Activated B cell treated with CpG ODN at 0.5 μM for 24 hours (primary cell): ENCODE measurements at regions of chr20 and their contacts with region 1.

Region 1: DNA sequence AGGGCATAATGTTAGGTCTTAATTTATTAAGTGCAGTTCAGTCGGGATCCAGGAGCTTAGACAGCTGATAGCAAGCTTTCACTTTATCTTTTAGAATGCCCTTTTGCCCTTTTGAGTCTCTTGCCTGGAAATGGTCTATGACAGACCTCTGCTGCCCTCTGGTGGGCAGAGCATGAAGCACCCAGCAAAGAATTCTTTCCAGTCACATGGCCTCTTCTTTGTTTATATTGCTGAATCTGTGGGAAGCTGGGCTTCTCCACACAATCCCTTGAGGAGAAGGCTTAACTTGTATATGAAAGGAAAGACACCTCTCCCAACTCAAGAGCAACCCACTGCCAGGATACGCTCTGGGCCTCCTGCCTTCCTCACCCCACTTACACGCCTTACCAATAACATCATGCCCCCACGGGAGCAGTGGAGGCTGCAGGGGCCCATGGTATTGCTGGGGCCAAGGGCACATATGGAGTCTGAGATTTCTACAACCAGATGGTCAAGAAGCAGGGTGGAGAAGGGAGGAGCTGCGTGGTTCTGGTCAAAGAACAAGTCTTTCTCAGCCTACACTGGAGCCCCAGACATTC is 20.4 kb downstream of the WFDC3 start:
- DNase-seq: peak; percentile 65
- ATAC-seq: peak; percentile 71
- H3K4me3 Mint-ChIP-seq: no peak overlapping the region
- H3K27ac Mint-ChIP-seq: no peak overlapping the region
- H3K4me1 Mint-ChIP-seq: peaks cover 5% of the 10 kb centered on the region
- H3K27me3 Mint-ChIP-seq: peaks cover 16% of the 10 kb centered on the region
- CTCF ChIP-seq: peak; percentile 20

Region 2: GRCh38 chr20:45095753-45096371 is 675.4 kb before region 1 on chr20:
- CTCF ChIA-PET with region 1: interaction called, 17 read pairs
- POLR2A ChIA-PET with region 1: no interaction called
- intact Hi-C with region 1: loop called (anchors 1 kb)
- DNase-seq: no peak
- ATAC-seq: peak; percentile 65
- H3K4me3 Mint-ChIP-seq: no peak overlapping the region
- H3K27ac Mint-ChIP-seq: no peak overlapping the region
- H3K4me1 Mint-ChIP-seq: peaks cover 19% of the 10 kb centered on the region
- H3K27me3 Mint-ChIP-seq: peaks cover 29% of the 10 kb centered on the region
- CTCF ChIP-seq: peak; percentile 36

Region 3: DNA sequence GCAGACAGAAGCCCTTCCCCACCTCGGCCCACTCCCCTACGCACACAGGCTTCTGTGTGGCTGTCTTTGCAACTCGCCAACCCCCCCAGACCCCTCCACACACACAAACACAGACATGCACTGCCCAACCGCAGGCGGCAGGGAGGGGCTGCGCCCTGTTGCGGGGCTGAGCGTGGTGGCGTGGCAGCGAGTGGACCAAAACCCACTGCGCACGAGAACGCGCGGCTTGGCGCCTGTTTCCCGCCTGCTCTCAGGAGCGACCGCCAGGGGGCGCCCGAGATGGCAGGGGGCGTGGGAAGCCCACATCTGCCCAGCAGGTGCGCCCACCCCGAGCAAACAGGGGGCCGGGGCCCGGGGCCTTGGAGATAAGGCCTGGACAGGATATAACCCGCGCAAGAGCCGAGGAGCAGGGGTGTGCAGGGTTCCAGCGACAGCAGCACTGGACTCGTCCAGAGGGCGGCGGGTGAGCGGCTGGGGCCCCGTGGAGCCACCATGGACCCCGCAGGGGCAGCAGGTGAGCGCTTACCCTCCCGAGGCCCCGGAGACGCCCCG is 464.8 kb before region 1 on chr20 and contains the start of gene RBPJL:
- CTCF ChIA-PET with region 1: interaction called, 10 read pairs
- POLR2A ChIA-PET with region 1: no interaction called
- intact Hi-C with region 1: loop called (anchors 1 kb)
- DNase-seq: peak; percentile 44
- ATAC-seq: no peak
- H3K4me3 Mint-ChIP-seq: no peak within 1 kb of the TSS
- H3K27ac Mint-ChIP-seq: no peak within 1 kb of the TSS
- H3K4me1 Mint-ChIP-seq: peaks cover 8% of the 10 kb centered on the region
- H3K27me3 Mint-ChIP-seq: peaks cover 47% of the 10 kb centered on the region
- CTCF ChIP-seq: peak; percentile 32
- total RNA-seq, gene RBPJL: not detected in 2 replicates

Region 4: DNA sequence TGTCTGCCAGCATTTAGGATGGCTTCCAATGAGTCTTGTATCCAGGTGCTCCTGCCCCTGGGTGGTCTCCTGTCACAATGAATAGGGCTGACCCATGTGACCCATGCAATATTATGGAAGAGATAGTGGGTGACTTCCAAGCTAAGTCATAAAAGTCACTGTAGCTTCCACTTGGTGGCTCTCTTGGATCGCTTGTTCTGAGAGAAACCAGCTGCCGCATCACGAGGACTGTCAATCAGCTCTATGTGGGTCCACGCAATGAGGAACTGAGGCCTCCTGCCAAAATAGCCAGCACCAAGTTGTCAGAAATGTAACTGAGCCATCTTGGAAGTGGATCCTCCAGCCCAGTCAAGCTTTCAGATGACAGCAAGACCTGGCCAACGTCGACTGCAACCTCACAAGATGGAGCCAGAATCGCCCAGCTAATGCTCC is 448.3 kb before region 1 on chr20:
- CTCF ChIA-PET with region 1: interaction called, 49 read pairs
- POLR2A ChIA-PET with region 1: interaction called, 3 read pairs
- intact Hi-C with region 1: loop called (anchors 1 kb)
- DNase-seq: no peak
- ATAC-seq: peak; percentile 19
- H3K4me3 Mint-ChIP-seq: no peak overlapping the region
- H3K27ac Mint-ChIP-seq: no peak overlapping the region
- H3K4me1 Mint-ChIP-seq: peaks cover 37% of the 10 kb centered on the region
- H3K27me3 Mint-ChIP-seq: no peaks in the 10 kb centered on the region
- CTCF ChIP-seq: no peak

Region 5: GRCh38 chr20:45373353-45374100 is 397.7 kb before region 1 on chr20:
- CTCF ChIA-PET with region 1: interaction called, 15 read pairs
- POLR2A ChIA-PET with region 1: no interaction called
- intact Hi-C with region 1: no loop called
- DNase-seq: peak; percentile 76
- ATAC-seq: peak; percentile 94
- H3K4me3 Mint-ChIP-seq: peak overlapping the region; percentile 86
- H3K27ac Mint-ChIP-seq: peak overlapping the region; percentile 76
- H3K4me1 Mint-ChIP-seq: peaks cover 56% of the 10 kb centered on the region
- H3K27me3 Mint-ChIP-seq: no peaks in the 10 kb centered on the region
- CTCF ChIP-seq: no peak

Region 6: GRCh38 chr20:45545754-45546453 is 225.4 kb before region 1 on chr20:
- CTCF ChIA-PET with region 1: no interaction called
- POLR2A ChIA-PET with region 1: no interaction called
- intact Hi-C with region 1: loop called (anchors 2 kb)
- DNase-seq: no peak
- ATAC-seq: no peak
- H3K4me3 Mint-ChIP-seq: no peak overlapping the region
- H3K27ac Mint-ChIP-seq: no peak overlapping the region
- H3K4me1 Mint-ChIP-seq: no peaks in the 10 kb centered on the region
- H3K27me3 Mint-ChIP-seq: peaks cover 27% of the 10 kb centered on the region
- CTCF ChIP-seq: no peak

Region 7: GRCh38 chr20:45783656-45784294 is 12.5 kb after region 1 on chr20:
- CTCF ChIA-PET with region 1: interaction called, 10 read pairs
- POLR2A ChIA-PET with region 1: no interaction called
- intact Hi-C with region 1: no loop called
- DNase-seq: no peak
- ATAC-seq: no peak
- H3K4me3 Mint-ChIP-seq: no peak overlapping the region
- H3K27ac Mint-ChIP-seq: no peak overlapping the region
- H3K4me1 Mint-ChIP-seq: peaks cover 12% of the 10 kb centered on the region
- H3K27me3 Mint-ChIP-seq: peaks cover 7% of the 10 kb centered on the region
- CTCF ChIP-seq: no peak

Region 8: DNA sequence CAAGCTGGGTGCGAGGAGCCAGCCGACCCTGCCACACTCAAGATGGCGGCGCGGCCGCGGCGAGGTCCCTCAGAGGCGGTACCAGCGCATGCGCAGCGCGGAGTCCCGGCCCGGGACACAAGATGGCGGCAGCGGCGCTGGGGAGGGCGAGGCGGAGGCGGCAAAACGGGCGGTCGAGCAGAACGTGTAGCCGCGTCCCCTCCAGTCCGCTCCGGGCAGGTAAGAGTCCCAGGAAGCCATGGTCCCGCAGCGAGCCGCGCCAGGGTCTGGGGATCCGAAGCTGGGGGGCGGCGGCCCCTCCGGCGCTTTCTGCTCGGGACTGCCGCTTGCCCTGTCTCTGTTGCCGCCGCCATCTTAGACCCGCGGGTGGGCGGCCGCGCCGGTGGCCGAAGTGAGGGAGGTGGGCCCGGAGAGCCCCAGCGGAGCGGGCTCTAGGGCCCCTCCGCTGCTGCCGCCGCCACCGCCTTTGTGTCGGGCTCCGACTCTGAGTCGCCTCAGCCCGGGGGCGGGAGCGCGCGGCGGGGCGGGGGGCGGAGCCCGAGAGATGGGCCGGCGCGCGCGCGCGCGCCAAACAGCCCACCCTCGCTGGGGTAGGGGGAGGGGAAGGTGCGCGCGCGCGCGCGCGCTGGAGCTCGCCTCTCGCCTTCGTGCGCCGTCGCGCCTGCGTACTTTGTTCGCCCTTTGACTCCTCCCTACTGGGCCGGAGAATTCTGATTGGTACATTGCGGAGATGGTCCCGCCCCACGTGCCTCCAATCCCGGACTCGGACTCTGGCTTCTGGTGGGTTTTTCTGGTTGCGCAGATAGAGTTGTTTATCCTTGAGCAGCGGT is 163.5 kb after region 1 on chr20 and contains the start of gene PCIF1:
- CTCF ChIA-PET with region 1: no interaction called
- POLR2A ChIA-PET with region 1: no interaction called
- intact Hi-C with region 1: no loop called
- DNase-seq: peak; percentile 97
- ATAC-seq: peak; percentile 80
- H3K4me3 Mint-ChIP-seq: peak within 1 kb of the TSS; percentile 97
- H3K27ac Mint-ChIP-seq: peak within 1 kb of the TSS; percentile 98
- H3K4me1 Mint-ChIP-seq: peaks cover 29% of the 10 kb centered on the region
- H3K27me3 Mint-ChIP-seq: no peaks in the 10 kb centered on the region
- CTCF ChIP-seq: no peak
- total RNA-seq, gene PCIF1: 48.3 and 55.7 TPM in 2 replicates